ENCODE measurements at regions of chr4 and their contacts with region 1.

Region 1: DNA sequence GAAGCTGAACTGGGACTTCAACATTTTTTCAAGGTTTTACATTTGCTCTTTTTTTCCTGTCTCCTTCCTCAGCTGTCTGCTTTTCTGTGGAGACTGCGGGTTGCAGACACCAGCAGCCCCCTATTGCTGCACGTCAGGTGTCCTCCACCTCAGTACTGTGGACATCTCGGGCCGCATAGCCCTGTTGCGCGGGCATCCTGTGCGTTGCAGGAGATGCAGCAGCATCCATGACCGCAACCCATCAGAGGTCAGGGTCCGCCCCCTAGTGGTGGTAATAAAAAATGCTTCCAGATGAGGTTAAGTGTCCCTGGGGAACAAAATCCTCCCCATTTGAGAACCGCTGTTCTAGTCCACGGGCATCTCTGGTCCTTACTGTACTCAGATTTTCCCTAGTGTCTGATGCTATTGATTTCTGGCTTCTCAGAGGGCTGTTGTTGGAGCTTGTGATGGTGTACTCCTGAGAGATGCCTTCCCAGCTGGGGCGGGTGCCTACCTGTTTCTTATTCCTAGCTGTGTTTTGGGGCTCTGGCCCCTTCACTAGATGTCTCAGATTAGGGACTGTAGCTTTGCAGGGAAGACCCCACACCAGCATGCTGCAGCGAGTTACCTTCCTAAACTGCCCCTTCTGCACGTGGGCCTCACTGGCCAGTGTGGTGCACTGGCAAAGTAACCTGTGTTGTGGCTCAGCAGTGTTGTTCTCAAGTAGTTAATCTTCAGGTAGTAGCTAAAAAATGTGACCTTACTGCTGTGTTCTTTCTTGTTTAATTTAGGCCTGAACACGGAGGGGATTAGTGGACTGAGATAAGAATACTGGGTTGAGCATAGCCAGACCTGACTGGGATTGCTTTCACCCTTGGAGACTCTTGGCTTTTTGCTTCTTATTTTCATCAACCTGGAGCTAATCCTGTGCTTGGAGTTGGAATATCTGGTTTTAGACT is 28.2 kb downstream of the NSD2 start:
- DNase-seq: peak; percentile 78
- ATAC-seq: peak; percentile 98
- H3K4me3 ChIP-seq: no peak overlapping the region
- H3K27ac ChIP-seq: no peak overlapping the region
- H3K4me1 ChIP-seq: peaks cover 2% of the 10 kb centered on the region; the same call in 1 of the 2 replicates
- H3K27me3 ChIP-seq: no peaks in the 10 kb centered on the region
- CTCF ChIP-seq: peak; percentile 86
- POLR2A ChIP-seq: 0 out of 2 replicates have a peak, but pooled peaks have one; percentile 31
- RAD21 ChIP-seq: peak; percentile 93

Region 2: DNA sequence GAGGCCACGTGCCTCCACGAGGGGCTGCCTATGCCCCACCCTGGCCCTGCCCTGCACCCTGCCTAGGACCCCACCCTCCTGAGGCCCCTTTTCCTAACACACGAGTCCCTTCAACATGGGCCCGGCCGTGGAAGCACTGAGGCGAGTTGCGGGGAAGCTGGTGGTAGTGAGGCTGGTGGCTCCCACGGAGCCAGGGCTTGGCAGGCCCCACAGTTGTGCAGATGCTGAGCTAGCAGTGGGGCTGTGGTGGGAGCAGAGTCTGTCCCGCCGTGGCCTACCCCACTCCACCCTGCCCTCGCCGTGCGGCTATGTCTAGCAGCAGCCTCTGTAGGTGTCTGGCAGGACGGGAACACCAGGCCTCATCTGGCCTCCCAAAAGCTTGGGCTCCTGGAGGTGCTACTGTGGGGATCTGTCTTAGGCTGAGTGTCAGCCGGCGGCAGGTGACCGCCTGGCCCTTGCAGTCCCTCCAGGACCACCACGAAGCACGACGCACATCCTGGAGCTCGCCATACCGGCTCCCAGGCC is 159.3 kb before region 1 on chr4:
- CTCF ChIA-PET with region 1: no interaction called
- POLR2A ChIA-PET with region 1: no interaction called
- dilution Hi-C with region 1: no loop called
- in situ Hi-C with region 1: loop called (anchors 5 kb)
- intact Hi-C with region 1: no loop called
- DNase-seq: no peak
- ATAC-seq: no peak
- H3K4me3 ChIP-seq: no peak overlapping the region
- H3K27ac ChIP-seq: no peak overlapping the region
- H3K4me1 ChIP-seq: no peaks in the 10 kb centered on the region
- H3K27me3 ChIP-seq: no peaks in the 10 kb centered on the region
- CTCF ChIP-seq: no peak
- POLR2A ChIP-seq: no peak
- RAD21 ChIP-seq: no peak

Region 3: DNA sequence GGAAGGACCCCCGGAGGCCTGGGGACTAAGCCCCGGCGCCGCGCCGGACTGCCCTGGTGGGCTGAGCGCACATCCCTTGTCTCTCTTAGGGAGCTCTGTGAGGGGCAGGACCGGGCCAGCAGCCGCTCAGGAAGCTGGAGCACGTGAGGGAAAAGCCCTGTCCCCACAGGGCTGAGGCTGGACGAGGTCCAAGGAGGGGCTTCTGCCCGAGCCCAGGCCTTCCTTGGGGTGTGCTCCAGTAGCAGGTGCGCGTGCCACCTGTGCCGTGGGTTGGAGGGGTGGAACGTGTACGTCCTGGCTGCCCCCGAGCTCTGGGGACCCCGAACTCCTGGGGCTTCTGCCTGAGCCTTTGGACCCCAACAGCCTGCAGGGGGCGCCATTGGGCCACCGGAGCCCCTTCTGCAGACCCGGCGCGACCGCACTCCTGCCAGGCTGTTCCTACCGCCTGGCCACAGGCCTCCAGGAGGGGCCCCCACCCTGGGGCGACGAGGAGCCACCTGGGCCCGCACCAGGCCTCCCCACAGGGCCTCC is 150.9 kb before region 1 on chr4:
- CTCF ChIA-PET with region 1: no interaction called
- POLR2A ChIA-PET with region 1: no interaction called
- dilution Hi-C with region 1: no loop called
- in situ Hi-C with region 1: loop called (anchors 5 kb)
- intact Hi-C with region 1: loop called (anchors 1 kb)
- DNase-seq: peak; percentile 41
- ATAC-seq: peak; percentile 81
- H3K4me3 ChIP-seq: no peak overlapping the region
- H3K27ac ChIP-seq: no peak overlapping the region
- H3K4me1 ChIP-seq: no peaks in the 10 kb centered on the region
- H3K27me3 ChIP-seq: no peaks in the 10 kb centered on the region; the same call in 1 of the 2 replicates
- CTCF ChIP-seq: peak; percentile 77
- POLR2A ChIP-seq: no peak
- RAD21 ChIP-seq: peak; percentile 80

Region 4: GRCh38 chr4:1842993-1843448 is 56.4 kb before region 1 on chr4:
- CTCF ChIA-PET with region 1: no interaction called
- POLR2A ChIA-PET with region 1: no interaction called
- dilution Hi-C with region 1: no loop called
- in situ Hi-C with region 1: no loop called
- intact Hi-C with region 1: loop called (anchors 2 kb)
- DNase-seq: peak; percentile 94
- ATAC-seq: peak; percentile 96
- H3K4me3 ChIP-seq: no peak overlapping the region
- H3K27ac ChIP-seq: peak overlapping the region; percentile 59
- H3K4me1 ChIP-seq: peaks cover 21% of the 10 kb centered on the region
- H3K27me3 ChIP-seq: no peaks in the 10 kb centered on the region
- CTCF ChIP-seq: no peak
- POLR2A ChIP-seq: no peak
- RAD21 ChIP-seq: peak; percentile 21; the same call in 1 of the 2 replicates

Region 5: GRCh38 chr4:1856042-1856788 is 43.2 kb before region 1 on chr4 and contains the start of gene LETM1:
- CTCF ChIA-PET with region 1: interaction called, 3 read pairs
- POLR2A ChIA-PET with region 1: interaction called, 4 read pairs
- dilution Hi-C with region 1: no loop called
- in situ Hi-C with region 1: no loop called
- intact Hi-C with region 1: loop called (anchors 5 kb)
- DNase-seq: peak; percentile 95
- ATAC-seq: peak; percentile 95
- H3K4me3 ChIP-seq: peak within 1 kb of the TSS; percentile 94
- H3K27ac ChIP-seq: peak within 1 kb of the TSS; percentile 81
- H3K4me1 ChIP-seq: peaks cover 19% of the 10 kb centered on the region
- H3K27me3 ChIP-seq: no peaks in the 10 kb centered on the region
- CTCF ChIP-seq: 0 out of 2 replicates have a peak, but pooled peaks have one; percentile 15
- POLR2A ChIP-seq: peak; percentile 67
- RAD21 ChIP-seq: no peak
- total RNA-seq, gene LETM1: 49.3 and 68.0 TPM in 2 replicates

Region 6: DNA sequence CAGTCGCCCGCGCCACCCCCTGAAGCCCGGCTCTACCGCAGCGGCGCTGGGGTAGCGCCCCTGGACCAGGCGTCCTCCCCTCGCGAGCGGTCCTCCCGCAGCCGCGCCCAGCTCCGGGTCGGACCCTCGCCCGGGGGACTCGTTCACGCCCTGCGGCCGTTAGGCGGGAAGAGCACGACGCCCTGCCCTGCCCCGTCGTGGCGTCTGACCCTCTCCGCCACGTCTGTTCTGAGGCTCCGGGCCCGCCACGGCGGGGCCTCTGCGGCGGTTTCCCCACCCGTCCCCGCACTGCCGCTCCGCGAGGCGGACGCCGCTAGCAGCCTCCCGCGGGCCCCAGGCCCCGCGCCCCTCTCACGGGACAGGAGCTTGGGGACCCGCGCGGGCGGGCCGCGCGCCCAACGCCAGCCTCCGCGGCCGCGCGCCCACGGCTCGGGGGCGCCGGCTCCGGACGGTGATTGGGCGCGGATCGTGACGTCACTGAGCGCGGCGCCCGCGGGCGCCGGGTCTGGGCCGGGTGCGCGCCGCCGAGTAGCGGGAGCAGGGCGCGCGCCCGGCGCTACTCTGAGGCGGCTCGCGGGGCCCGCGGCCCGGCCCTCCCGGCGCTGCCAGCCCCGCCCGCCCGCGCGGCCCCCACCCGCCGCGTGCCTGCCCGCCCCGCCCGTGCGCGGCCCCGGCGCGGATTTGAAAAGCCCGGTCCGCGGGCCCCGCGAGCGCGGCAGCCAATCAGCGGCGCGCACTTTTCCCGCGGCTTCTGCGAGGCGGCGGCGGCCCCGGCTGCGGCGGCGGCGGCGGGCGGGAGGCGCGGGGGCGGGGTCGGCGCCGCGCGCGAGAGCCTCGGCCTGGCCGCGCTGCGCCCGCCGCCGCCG is 28.6 kb before region 1 on chr4 and contains the start of gene NSD2:
- CTCF ChIA-PET with region 1: no interaction called
- POLR2A ChIA-PET with region 1: no interaction called
- dilution Hi-C with region 1: no loop called
- in situ Hi-C with region 1: no loop called
- intact Hi-C with region 1: loop called (anchors 2 kb)
- DNase-seq: peak; percentile 87
- ATAC-seq: peak; percentile 75
- H3K4me3 ChIP-seq: peak within 1 kb of the TSS; percentile 96
- H3K27ac ChIP-seq: peak within 1 kb of the TSS; percentile 96
- H3K4me1 ChIP-seq: peaks cover 13% of the 10 kb centered on the region
- H3K27me3 ChIP-seq: peaks cover 2% of the 10 kb centered on the region; the same call in 1 of the 2 replicates
- CTCF ChIP-seq: no peak
- POLR2A ChIP-seq: peak; percentile 83
- RAD21 ChIP-seq: no peak
- total RNA-seq, gene NSD2: 62.2 and 68.1 TPM in 2 replicates